CD4-positive, alpha-beta memory T cell (primary cell): ENCODE measurements at regions of chr5 and their contacts with region 1.

Region 1: GRCh38 chr5:177357459-177358351 is at the start of gene RGS14:
- DNase-seq: peak; percentile 85 to 91 (median 87)
- H3K4me3 ChIP-seq: peak within 1 kb of the TSS; percentile 92 to 95
- H3K4me3 Mint-ChIP-seq: peak within 1 kb of the TSS; percentile 84 to 97 (median 90)
- H3K27ac ChIP-seq: peak within 1 kb of the TSS; percentile 75
- H3K27ac Mint-ChIP-seq: peak within 1 kb of the TSS; percentile 89 to 97 (median 97)
- H3K4me1 ChIP-seq: peaks cover 71% of the 10 kb centered on the region
- H3K4me1 Mint-ChIP-seq: peaks cover 53 to 92% (median 73%) of the 10 kb centered on the region in 4 donors
- H3K27me3 ChIP-seq: no peaks in the 10 kb centered on the region
- H3K27me3 Mint-ChIP-seq: no peaks in the 10 kb centered on the region
- total RNA-seq, gene RGS14: 167 to 168 TPM

Region 2: DNA sequence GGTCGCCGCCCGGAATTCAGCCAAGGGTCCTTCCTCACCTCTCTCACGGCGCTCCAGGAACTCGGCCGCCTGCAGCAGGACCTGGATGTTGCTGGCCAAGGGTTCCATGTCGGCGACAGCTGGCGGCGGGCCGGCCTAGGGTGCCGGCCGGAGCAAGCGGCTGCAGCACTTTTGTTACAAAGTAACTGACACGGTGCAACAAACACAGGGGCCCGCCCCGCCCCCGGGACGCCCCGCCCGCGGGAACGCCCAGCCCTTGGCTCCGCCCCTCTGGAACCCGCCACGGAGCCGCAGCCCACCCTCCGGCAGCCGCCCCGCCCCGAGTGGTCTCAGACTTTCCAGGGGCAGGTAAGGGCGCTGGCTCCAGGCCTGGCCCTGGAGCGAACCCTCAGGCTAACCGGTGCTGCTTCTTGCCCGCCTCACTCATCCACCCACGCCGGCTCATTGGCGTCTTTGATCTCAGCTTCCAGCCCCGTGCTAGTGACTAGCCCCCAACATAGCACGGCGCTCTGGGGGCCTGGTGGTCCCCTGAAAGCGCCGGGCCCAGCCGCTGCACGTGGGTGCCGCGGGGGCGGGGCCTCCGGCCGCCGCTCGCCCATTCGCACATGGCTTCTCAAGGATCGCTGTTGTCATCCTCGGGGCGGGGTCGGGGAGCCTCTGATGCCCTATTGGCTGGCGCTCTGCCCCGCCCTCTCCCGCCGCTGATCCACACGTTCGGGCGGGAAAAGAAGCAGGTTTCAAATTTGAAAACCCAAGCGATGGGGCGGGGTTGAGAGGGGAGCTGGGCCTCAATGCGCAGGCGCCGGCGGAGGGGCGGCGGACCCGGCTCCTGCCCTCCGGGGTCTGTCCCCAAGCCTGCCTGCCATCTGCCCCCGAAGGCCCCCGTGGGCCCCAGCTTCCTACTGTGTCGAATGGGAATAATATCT is 45.7 kb before region 1 on chr5 and contains the start of gene MXD3:
- CTCF ChIA-PET with region 1: interaction called, 14 read pairs
- POLR2A ChIA-PET with region 1: interaction called, 6 read pairs
- intact Hi-C with region 1: no loop called
- DNase-seq: peak; percentile 90 to 96 (median 93)
- H3K4me3 ChIP-seq: peak within 1 kb of the TSS; percentile 24 to 64
- H3K4me3 Mint-ChIP-seq: peak within 1 kb of the TSS; percentile 70 to 86 (median 80)
- H3K27ac ChIP-seq: peak within 1 kb of the TSS; percentile 49
- H3K27ac Mint-ChIP-seq: peak within 1 kb of the TSS; percentile 29 to 83 (median 75)
- H3K4me1 ChIP-seq: peaks cover 41% of the 10 kb centered on the region
- H3K4me1 Mint-ChIP-seq: peaks cover 17 to 49% (median 30%) of the 10 kb centered on the region in 4 donors
- H3K27me3 ChIP-seq: no peaks in the 10 kb centered on the region
- H3K27me3 Mint-ChIP-seq: no peaks in the 10 kb centered on the region
- total RNA-seq, gene MXD3: 17.3 TPM

Region 3: GRCh38 chr5:177317959-177318377 is 39.7 kb before region 1 on chr5:
- CTCF ChIA-PET with region 1: interaction called, 11 read pairs
- POLR2A ChIA-PET with region 1: interaction called, 3 read pairs
- intact Hi-C with region 1: no loop called
- DNase-seq: peak; percentile 68 to 73 (median 69)
- H3K4me3 ChIP-seq: no peak overlapping the region
- H3K4me3 Mint-ChIP-seq: no peak overlapping the region
- H3K27ac ChIP-seq: no peak overlapping the region
- H3K27ac Mint-ChIP-seq: peak overlapping the region in 2 of 7 donors; percentile 10 to 34
- H3K4me1 ChIP-seq: peaks cover 15% of the 10 kb centered on the region
- H3K4me1 Mint-ChIP-seq: peaks cover 8 to 36% (median 20%) of the 10 kb centered on the region in 4 donors
- H3K27me3 ChIP-seq: no peaks in the 10 kb centered on the region
- H3K27me3 Mint-ChIP-seq: no peaks in the 10 kb centered on the region

Region 4: GRCh38 chr5:177370488-177371119 is 12.9 kb after region 1 on chr5:
- CTCF ChIA-PET with region 1: interaction called, 90 read pairs
- POLR2A ChIA-PET with region 1: interaction called, 59 read pairs
- intact Hi-C with region 1: loop called (anchors 1 kb)
- DNase-seq: peak in 3 of 5 donors; percentile 65 to 81 (median 79)
- H3K4me3 ChIP-seq: no peak overlapping the region
- H3K4me3 Mint-ChIP-seq: peak overlapping the region in 5 of 8 donors; percentile 15 to 80 (median 61)
- H3K27ac ChIP-seq: peak overlapping the region; percentile 28
- H3K27ac Mint-ChIP-seq: peak overlapping the region in 4 of 7 donors; percentile 64 to 88 (median 70)
- H3K4me1 ChIP-seq: peaks cover 85% of the 10 kb centered on the region
- H3K4me1 Mint-ChIP-seq: peaks cover 47 to 78% (median 62%) of the 10 kb centered on the region in 4 donors
- H3K27me3 ChIP-seq: no peaks in the 10 kb centered on the region
- H3K27me3 Mint-ChIP-seq: no peaks in the 10 kb centered on the region

Region 5: DNA sequence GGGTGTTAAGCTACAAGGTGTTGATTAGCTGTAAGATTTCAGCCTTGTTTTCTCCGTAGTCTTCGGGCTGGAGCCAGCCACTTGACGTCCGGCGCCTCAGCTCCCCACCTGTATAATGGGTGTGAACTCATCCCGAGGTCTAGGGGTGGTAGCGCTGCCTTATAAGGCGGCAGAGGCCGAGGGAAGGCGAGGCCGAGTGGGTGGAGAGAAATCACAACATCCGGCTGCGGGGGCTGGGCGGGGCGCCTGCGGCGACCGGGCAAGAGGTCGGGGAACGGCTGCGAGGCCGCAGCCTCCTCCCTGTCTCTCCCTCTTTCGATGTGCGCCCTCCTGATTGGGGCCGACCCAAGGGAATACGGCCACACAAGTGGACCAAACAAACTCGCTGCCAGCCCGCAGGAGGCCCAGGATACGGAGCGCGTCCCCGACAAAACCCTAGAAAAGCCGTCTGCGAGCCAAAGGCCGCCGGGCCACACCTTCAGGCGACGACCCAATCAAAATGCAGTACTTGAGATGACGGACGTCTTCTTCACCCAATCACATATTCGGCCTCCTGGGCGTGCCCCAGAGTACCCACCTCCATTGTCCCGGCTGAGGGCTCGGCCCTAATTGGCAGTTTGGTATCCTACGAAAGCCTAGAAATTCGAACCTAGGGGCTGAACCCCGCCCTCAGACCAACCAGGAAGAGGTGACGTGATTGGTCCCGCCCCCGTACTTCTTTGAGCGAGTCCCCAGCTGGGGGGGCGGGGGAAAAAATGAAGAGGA is 68.3 kb after region 1 on chr5:
- CTCF ChIA-PET with region 1: no interaction called
- POLR2A ChIA-PET with region 1: interaction called, 11 read pairs
- intact Hi-C with region 1: loop called (anchors 1 kb)
- DNase-seq: peak; percentile 99 to 100 (median 100)
- H3K4me3 ChIP-seq: peak overlapping the region; percentile 21 to 53
- H3K4me3 Mint-ChIP-seq: peak overlapping the region; percentile 89 to 96 (median 92)
- H3K27ac ChIP-seq: peak overlapping the region; percentile 65
- H3K27ac Mint-ChIP-seq: peak overlapping the region; percentile 91 to 99 (median 99)
- H3K4me1 ChIP-seq: peaks cover 52% of the 10 kb centered on the region
- H3K4me1 Mint-ChIP-seq: peaks cover 31 to 65% (median 44%) of the 10 kb centered on the region in 4 donors
- H3K27me3 ChIP-seq: no peaks in the 10 kb centered on the region
- H3K27me3 Mint-ChIP-seq: no peaks in the 10 kb centered on the region

Region 6: DNA sequence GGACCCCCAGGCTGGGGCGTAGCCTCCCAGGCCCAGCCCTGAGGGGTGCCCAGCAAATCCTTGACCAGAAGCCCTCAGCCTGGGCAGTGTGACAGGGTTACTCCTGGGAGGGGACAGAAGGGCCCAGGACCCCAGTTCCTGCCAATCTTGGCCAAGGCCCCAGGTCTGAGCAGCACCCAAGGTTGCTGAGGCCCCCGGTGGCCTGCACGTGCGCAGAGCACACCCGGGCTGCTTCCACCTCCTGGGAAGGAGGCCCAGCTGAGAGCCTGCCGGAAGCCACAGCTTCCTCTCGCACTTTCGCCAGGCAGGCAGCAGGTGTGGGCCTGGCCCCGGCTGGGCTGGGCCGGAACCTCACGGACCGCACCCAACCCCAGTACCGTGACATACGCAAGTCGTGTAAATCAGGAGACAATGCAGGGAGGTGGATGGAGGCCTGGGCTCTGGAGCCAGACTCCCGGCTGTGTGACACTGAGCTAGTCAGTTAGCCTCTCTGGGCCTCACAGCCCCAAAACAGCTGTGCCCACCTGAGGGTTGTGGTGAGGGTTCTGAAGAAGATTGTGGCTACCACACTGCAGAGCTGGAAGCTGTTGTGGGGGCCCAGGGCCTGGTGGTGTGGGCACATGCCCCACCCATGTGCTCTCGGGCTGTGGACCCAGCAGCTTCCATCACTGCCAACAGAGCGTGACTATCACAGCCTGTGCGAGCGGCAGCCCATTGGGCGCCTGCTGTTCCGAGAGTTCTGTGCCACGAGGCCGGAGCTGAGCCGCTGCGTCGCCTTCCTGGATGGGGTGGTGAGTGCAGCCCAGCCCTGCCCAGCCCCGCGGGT is 73.8 kb after region 1 on chr5:
- CTCF ChIA-PET with region 1: no interaction called
- POLR2A ChIA-PET with region 1: interaction called, 11 read pairs
- intact Hi-C with region 1: loop called (anchors 1 kb)
- DNase-seq: peak; percentile 81 to 88 (median 85)
- H3K4me3 ChIP-seq: peak overlapping the region; percentile 36 to 87
- H3K4me3 Mint-ChIP-seq: peak overlapping the region; percentile 85 to 97 (median 94)
- H3K27ac ChIP-seq: peak overlapping the region; percentile 87
- H3K27ac Mint-ChIP-seq: peak overlapping the region; percentile 91 to 99 (median 96)
- H3K4me1 ChIP-seq: peaks cover 94% of the 10 kb centered on the region
- H3K4me1 Mint-ChIP-seq: peaks cover 34 to 89% (median 59%) of the 10 kb centered on the region in 4 donors
- H3K27me3 ChIP-seq: no peaks in the 10 kb centered on the region
- H3K27me3 Mint-ChIP-seq: no peaks in the 10 kb centered on the region

Region 7: GRCh38 chr5:177446200-177447065 is 88.7 kb after region 1 on chr5 and contains the start of gene PRR7:
- CTCF ChIA-PET with region 1: no interaction called
- POLR2A ChIA-PET with region 1: interaction called, 22 read pairs
- intact Hi-C with region 1: no loop called
- DNase-seq: peak; percentile 77 to 85 (median 82)
- H3K4me3 ChIP-seq: peak within 1 kb of the TSS in 1 of 2 donors; percentile 50
- H3K4me3 Mint-ChIP-seq: peak within 1 kb of the TSS; percentile 81 to 90 (median 85)
- H3K27ac ChIP-seq: peak within 1 kb of the TSS; percentile 94
- H3K27ac Mint-ChIP-seq: peak within 1 kb of the TSS; percentile 95 to 99 (median 97)
- H3K4me1 ChIP-seq: peaks cover 51% of the 10 kb centered on the region
- H3K4me1 Mint-ChIP-seq: peaks cover 25 to 53% (median 41%) of the 10 kb centered on the region in 4 donors
- H3K27me3 ChIP-seq: no peaks in the 10 kb centered on the region
- H3K27me3 Mint-ChIP-seq: no peaks in the 10 kb centered on the region
- total RNA-seq, gene PRR7: 5.2 to 7.2 TPM